Heart right ventricle (tissue), 16 donors: ENCODE measurements at regions of chr22 and their contacts with region 1.

Region 1: DNA sequence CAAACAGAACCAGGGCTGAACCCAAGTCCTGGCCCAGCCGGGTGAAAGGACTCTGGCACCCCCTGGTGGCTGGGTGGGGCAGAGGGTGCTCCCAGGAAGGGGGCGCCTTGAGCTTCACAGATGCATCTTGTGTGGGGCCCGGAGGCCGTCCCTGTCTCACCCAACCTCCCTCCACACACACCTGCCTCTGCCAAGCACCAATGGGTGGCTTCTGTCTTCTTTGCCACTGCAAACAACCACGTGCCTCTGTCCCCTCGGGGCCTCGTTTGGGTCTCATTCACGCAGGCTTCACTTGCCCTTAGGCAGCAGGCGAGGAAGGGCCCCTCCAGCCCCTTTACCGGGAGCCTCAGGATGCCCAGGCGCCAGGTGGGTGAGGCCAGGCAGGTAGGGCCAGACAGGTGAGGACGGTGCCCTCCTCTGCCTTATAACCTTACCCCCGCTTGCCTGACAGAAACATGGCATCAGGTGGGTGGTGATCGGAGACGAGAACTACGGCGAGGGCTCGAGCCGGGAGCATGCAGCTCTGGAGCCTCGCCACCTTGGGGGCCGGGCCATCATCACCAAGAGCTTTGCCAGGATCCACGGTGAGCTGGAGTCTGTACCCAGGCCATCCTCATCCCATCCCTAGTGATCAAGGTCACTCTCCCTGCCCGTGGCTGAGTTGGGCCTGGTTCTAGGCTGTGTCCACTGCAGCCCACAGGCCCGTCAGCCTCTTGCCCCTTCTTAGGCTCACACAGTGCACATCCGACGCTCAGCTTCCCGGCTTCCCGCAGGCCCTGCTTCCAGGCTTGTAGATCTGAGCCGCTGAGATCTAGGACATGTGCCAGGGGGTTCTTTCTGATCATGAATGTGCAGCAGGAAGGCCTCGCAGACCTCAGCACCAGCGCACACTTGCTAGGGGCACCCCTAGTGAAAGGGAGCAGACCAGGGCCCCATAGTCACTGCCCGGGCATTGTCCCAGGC is 17.2 kb downstream of the POLR3H start:
- DNase-seq: peak in 1 of 2 donors; percentile 61
- ATAC-seq: peak in 4 of 8 donors; percentile 10 to 41 (median 11)
- H3K4me3 ChIP-seq: no peak overlapping the region
- H3K27ac ChIP-seq: peak overlapping the region in 9 of 10 donors; percentile 71 to 90 (median 85)
- H3K4me1 ChIP-seq: peaks cover 32 to 64% (median 57%) of the 10 kb centered on the region in 9 donors
- H3K27me3 ChIP-seq: no peaks in the 10 kb centered on the region
- CTCF ChIP-seq: peak; percentile 58 to 85 (median 81)

Region 2: GRCh38 chr22:41288245-41288946 is 238.7 kb before region 1 on chr22:
- intact Hi-C with region 1: no loop called
- DNase-seq: peak in 1 of 2 donors; percentile 11
- ATAC-seq: no peak
- H3K4me3 ChIP-seq: no peak overlapping the region
- H3K27ac ChIP-seq: peak overlapping the region in 9 of 10 donors; percentile 26 to 87 (median 63)
- H3K4me1 ChIP-seq: peaks cover 0 to 31% (median 25%) of the 10 kb centered on the region in 9 donors
- H3K27me3 ChIP-seq: no peaks in the 10 kb centered on the region
- CTCF ChIP-seq: peak in 2 of 9 donors; percentile 5 to 10

Region 3: DNA sequence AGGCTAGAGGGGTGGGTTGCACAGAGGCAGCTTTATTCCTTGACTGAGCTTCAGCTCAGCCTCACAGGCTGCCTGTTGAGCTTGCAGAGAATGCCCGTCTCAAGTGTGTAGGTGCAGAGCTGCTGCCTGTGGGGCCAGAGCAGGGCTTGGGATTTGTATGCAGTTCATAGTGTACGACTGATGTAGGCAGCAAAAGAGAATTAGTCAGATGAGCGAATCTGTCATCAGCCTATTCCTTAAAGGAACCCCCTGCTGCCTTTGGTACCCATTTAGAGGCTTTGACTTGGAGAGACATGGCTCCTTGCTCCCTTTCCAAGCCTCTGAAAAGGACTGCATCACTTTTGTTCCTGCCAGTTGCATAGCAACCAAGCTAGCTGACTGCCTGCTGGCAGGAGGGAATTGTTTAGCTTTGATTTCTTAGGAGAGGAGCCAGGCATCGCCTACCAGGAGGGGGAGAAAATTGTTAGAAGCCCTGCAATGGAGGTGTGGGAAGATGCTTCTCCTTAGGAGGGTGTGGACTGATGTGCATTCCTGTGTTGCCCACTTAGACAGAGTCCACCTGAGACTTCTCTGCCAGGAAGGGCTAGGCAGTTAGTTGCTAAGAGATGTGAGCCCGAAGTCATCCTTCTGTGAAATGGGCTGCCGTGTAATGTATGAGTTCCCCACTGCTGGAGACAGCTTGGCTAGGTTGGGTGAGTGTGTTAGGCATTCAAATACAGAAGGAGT is 47.3 kb before region 1 on chr22:
- intact Hi-C with region 1: loop called in 2 of 10 experiments (anchors 10 kb)
- DNase-seq: no peak
- ATAC-seq: peak in 6 of 8 donors; percentile 3 to 32 (median 19)
- H3K4me3 ChIP-seq: no peak overlapping the region
- H3K27ac ChIP-seq: peak overlapping the region in 9 of 10 donors; percentile 60 to 77 (median 71)
- H3K4me1 ChIP-seq: peaks cover 30 to 99% (median 78%) of the 10 kb centered on the region in 9 donors
- H3K27me3 ChIP-seq: no peaks in the 10 kb centered on the region
- CTCF ChIP-seq: no peak

Region 4: GRCh38 chr22:41596776-41597634 is 69.9 kb after region 1 on chr22:
- intact Hi-C with region 1: no loop called
- DNase-seq: peak; percentile 34 to 64
- ATAC-seq: peak; percentile 68 to 92 (median 87)
- H3K4me3 ChIP-seq: no peak overlapping the region
- H3K27ac ChIP-seq: peak overlapping the region in 9 of 10 donors; percentile 16 to 72 (median 61)
- H3K4me1 ChIP-seq: peaks cover 0 to 14% (median 10%) of the 10 kb centered on the region in 9 donors
- H3K27me3 ChIP-seq: no peaks in the 10 kb centered on the region
- CTCF ChIP-seq: peak; percentile 39 to 76 (median 71)